HAP-1 (cell line): ENCODE measurements at regions of chr1 and their contacts with region 1.

Region 1: GRCh38 chr1:243917177-243917862 is 67.3 kb upstream of the AKT3 start:
- DNase-seq: no peak
- H3K4me3 ChIP-seq: no peak overlapping the region
- H3K4me1 ChIP-seq: no peaks in the 10 kb centered on the region
- H3K27me3 ChIP-seq: no peaks in the 10 kb centered on the region

Region 2: DNA sequence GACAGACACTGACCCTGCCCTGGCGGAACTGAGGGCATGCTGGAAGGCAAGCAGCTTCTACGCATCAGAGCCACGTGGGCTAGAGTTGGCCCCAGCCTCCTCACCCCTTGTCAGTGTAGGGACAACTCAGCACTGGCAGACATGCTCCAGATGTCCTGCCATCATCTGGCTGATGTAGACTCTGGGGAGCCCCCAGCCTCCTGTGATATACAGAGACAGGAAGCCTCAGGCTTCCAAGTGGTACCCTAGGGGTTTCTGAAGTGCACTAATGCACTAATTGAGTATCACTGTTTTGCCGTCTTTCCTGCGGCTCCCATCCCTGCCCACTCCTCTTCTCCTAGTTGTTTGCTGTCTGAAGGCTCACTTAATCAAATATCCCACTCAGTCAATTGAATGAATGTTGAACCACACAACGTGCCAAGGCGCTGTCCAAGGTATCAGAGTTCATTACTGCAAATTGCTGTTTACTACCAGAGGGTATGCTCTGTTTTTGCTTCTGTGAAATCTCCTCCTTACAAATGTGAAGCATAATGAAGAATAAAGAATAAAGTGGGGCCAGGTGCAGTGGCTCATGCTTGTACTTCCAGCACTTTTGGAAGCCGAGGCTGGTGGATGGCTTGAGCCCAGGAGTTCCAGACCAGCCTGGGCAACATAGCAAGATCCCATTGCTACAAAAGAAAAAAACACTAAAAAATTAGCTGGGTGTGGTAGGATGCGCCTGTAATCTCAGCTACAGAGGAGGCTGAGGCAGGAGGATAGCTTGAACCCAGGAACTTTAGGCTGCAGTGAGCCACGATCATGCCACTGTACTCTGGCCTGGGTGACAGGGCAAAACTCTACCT is 57.4 kb after region 1 on chr1:
- in situ Hi-C with region 1: loop called (anchors 10 kb)
- DNase-seq: peak in 1 of 2 experiments; percentile 41
- H3K4me3 ChIP-seq: no peak overlapping the region
- H3K4me1 ChIP-seq: no peaks in the 10 kb centered on the region
- H3K27me3 ChIP-seq: no peaks in the 10 kb centered on the region